ENCODE measurements at regions of chr6 and their contacts with region 1.

Region 1: GRCh38 chr6:134145786-134146185 is 93.4 kb upstream of the SLC2A12 start:
- DNase-seq: no peak
- H3K4me3 ChIP-seq: no peak overlapping the region
- H3K27ac ChIP-seq: no peak overlapping the region
- H3K4me1 ChIP-seq: no peaks in the 10 kb centered on the region
- H3K27me3 ChIP-seq: peaks cover 0 to 2% of the 10 kb centered on the region in 2 experiments
- CTCF ChIP-seq: no peak
- POLR2A ChIP-seq: no peak

Region 2: GRCh38 chr6:134111062-134111677 is 34.6 kb before region 1 on chr6:
- CTCF ChIA-PET with region 1: no interaction called
- POLR2A ChIA-PET with region 1: interaction called, 11 read pairs
- dilution Hi-C with region 1: no loop called
- intact Hi-C with region 1: no loop called
- DNase-seq: peak; percentile 59
- H3K4me3 ChIP-seq: no peak overlapping the region
- H3K27ac ChIP-seq: no peak overlapping the region
- H3K4me1 ChIP-seq: no peaks in the 10 kb centered on the region
- H3K27me3 ChIP-seq: peaks cover 3 to 6% of the 10 kb centered on the region in 2 experiments
- CTCF ChIP-seq: peak; percentile 81 to 85
- POLR2A ChIP-seq: no peak

Measured in endothelial cell of umbilical vein (primary cell).